ENCODE measurements at regions of chr1 and their contacts with region 1.

Region 1: DNA sequence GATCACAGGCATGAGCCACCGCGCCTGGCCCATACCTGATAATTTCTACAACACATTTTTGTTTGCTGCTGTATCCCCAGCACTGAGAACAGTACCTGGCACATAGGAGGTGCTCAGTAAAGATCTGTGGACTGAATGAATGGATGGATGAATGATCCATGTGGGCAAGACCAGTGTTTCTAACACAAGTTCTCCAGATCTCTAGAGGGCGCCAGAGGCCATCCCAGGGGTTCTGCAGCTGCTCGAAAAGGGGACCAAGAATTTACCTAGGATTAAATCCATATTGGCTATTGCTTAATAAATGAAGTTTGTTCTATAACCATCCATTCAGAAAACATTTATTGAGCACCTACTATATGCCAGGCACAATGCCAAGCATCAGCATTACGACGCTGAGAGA is 167.7 kb downstream of the ACTL8 start:
- DNase-seq: peak in 1 of 2 experiments; percentile 37
- H3K4me3 ChIP-seq: no peak overlapping the region
- H3K4me3 Mint-ChIP-seq: no peak overlapping the region
- H3K27ac Mint-ChIP-seq: no peak overlapping the region
- H3K4me1 ChIP-seq: no peaks in the 10 kb centered on the region
- H3K4me1 Mint-ChIP-seq: no peaks in the 10 kb centered on the region
- H3K27me3 ChIP-seq: no peaks in the 10 kb centered on the region
- H3K27me3 Mint-ChIP-seq: no peaks in the 10 kb centered on the region
- CTCF ChIP-seq: peak; percentile 32 to 47

Region 2: GRCh38 chr1:17089506-17089905 is 833.3 kb before region 1 on chr1:
- CTCF ChIA-PET with region 1: no interaction called
- POLR2A ChIA-PET with region 1: no interaction called
- intact Hi-C with region 1: no loop called
- DNase-seq: no peak
- H3K4me3 ChIP-seq: no peak overlapping the region
- H3K4me3 Mint-ChIP-seq: no peak overlapping the region
- H3K27ac Mint-ChIP-seq: no peak overlapping the region
- H3K4me1 ChIP-seq: no peaks in the 10 kb centered on the region
- H3K4me1 Mint-ChIP-seq: no peaks in the 10 kb centered on the region
- H3K27me3 ChIP-seq: no peaks in the 10 kb centered on the region
- H3K27me3 Mint-ChIP-seq: no peaks in the 10 kb centered on the region
- CTCF ChIP-seq: no peak

Region 3: DNA sequence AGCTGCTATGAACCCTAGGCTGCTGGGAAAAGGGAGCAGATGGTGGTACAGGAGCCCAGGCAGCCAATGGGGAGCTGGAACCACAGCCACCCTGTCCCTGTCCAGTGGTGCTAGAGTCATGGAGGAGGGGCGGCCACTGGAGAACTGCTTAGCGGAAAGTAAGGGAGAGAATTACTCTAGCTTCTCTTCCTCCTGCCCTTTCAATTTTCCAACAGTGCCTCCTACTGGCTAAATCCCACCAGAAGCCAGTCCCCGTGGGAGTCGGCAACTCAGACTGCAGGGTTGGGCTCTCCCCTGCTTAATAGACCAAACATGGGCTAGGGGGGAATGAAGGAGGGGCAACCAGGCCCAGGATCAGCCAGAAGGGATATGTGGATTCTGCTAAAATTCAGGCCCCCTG is 13.2 kb before region 1 on chr1:
- CTCF ChIA-PET with region 1: no interaction called
- POLR2A ChIA-PET with region 1: no interaction called
- intact Hi-C with region 1: no loop called
- DNase-seq: no peak
- H3K4me3 ChIP-seq: no peak overlapping the region
- H3K4me3 Mint-ChIP-seq: no peak overlapping the region
- H3K27ac Mint-ChIP-seq: no peak overlapping the region
- H3K4me1 ChIP-seq: no peaks in the 10 kb centered on the region
- H3K4me1 Mint-ChIP-seq: no peaks in the 10 kb centered on the region
- H3K27me3 ChIP-seq: no peaks in the 10 kb centered on the region
- H3K27me3 Mint-ChIP-seq: peaks cover 14% of the 10 kb centered on the region
- CTCF ChIP-seq: no peak

Region 4: DNA sequence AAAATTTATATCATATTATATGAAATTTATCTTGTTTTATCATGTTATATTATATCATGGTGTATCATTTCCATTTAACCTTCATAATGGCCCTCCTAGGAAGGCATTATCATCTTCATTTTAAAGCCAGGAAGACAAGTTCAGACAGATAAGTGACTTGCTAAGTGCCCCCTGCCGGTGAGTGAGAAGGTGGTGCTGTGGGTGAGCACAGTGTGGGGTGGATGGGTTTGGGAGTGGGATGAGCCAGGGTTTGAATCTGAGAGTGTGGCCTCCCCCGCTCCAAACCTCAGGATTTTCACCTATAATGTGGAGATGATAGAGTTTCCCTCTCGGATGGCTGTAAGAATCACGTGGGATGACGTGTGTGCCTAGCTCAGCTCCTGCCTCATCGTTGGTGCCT is 76.1 kb after region 1 on chr1:
- CTCF ChIA-PET with region 1: no interaction called
- POLR2A ChIA-PET with region 1: no interaction called
- intact Hi-C with region 1: loop called (anchors 5 kb)
- DNase-seq: peak in 1 of 2 experiments; percentile 15
- H3K4me3 ChIP-seq: no peak overlapping the region
- H3K4me3 Mint-ChIP-seq: no peak overlapping the region
- H3K27ac Mint-ChIP-seq: no peak overlapping the region
- H3K4me1 ChIP-seq: no peaks in the 10 kb centered on the region
- H3K4me1 Mint-ChIP-seq: no peaks in the 10 kb centered on the region
- H3K27me3 ChIP-seq: no peaks in the 10 kb centered on the region
- H3K27me3 Mint-ChIP-seq: peaks cover 15% of the 10 kb centered on the region
- CTCF ChIP-seq: peak in 1 of 2 experiments; percentile 39

Region 5: DNA sequence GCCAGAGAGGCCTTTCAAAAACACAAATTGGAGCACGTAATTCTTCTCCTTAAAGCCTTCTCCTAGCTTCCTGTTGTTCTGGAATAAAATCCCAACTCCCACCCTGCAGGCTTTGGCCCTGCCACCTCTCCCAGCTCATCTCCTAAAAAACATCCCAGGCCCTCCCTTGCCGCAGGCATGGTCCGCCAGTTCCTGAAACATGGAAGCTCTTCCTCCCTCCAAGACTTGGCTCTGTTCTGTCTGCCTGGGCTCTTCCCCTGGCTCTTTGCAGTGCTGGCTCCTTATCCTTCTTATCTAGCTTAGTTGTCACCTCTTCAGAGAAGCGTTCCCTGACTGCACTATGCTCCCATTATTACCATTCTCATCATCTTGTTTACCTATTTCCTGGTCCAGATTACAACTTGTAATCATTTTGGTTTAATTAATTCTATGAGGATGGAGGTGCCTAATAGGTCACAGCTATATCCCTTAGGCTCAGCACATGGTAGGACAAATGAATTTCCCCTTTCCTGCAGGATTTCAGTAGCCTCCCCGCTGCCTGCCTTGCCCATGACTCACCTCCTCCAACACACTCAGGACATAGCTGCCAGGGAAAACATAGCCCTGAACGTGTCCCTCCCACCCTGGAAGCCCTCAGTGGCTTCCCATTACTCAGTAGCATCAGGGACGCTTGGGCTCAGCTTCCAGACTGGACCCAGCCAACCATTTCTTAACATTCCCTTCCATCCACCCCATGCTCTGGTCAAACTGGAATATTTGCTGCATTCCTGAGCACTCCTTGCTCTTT is 169.0 kb after region 1 on chr1:
- CTCF ChIA-PET with region 1: no interaction called
- POLR2A ChIA-PET with region 1: no interaction called
- intact Hi-C with region 1: loop called (anchors 10 kb)
- DNase-seq: no peak
- H3K4me3 ChIP-seq: no peak overlapping the region
- H3K4me3 Mint-ChIP-seq: no peak overlapping the region
- H3K27ac Mint-ChIP-seq: no peak overlapping the region
- H3K4me1 ChIP-seq: no peaks in the 10 kb centered on the region
- H3K4me1 Mint-ChIP-seq: peaks cover 6% of the 10 kb centered on the region
- H3K27me3 ChIP-seq: no peaks in the 10 kb centered on the region
- H3K27me3 Mint-ChIP-seq: peaks cover 5% of the 10 kb centered on the region
- CTCF ChIP-seq: no peak

Region 6: GRCh38 chr1:18160290-18160942 is 237.6 kb after region 1 on chr1:
- CTCF ChIA-PET with region 1: no interaction called
- POLR2A ChIA-PET with region 1: no interaction called
- intact Hi-C with region 1: no loop called
- DNase-seq: no peak
- H3K4me3 ChIP-seq: no peak overlapping the region
- H3K4me3 Mint-ChIP-seq: no peak overlapping the region
- H3K27ac Mint-ChIP-seq: no peak overlapping the region
- H3K4me1 ChIP-seq: no peaks in the 10 kb centered on the region
- H3K4me1 Mint-ChIP-seq: no peaks in the 10 kb centered on the region
- H3K27me3 ChIP-seq: no peaks in the 10 kb centered on the region; the same call in 1 of the 2 replicates
- H3K27me3 Mint-ChIP-seq: peaks cover 18% of the 10 kb centered on the region
- CTCF ChIP-seq: no peak

Measured in Caco-2 (cell line).